SK-N-SH (cell line): ENCODE measurements at regions of chr6 and their contacts with region 1.

Region 1: DNA sequence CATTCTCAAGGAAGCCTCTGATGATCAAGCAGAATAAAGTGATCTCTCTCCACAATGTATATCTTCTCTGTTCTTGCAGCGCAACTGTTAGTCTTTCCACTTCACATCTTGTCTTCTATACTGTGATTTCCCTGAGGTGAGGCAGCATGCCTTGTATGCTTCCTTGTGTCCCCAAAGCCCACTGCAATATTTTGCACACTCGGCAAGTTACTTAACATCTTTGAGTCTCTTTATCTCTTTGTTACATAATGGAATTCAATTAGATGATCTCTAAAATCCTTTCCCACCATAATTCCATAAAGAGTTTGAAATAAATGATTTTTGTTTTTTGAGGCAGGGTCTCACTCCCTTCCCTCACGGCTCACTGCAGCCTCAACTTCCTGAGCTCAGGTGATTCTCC is 40.4 kb upstream of the ALDH8A1 start:
- DNase-seq: no peak
- H3K4me3 ChIP-seq: no peak overlapping the region
- H3K27ac ChIP-seq: no peak overlapping the region
- H3K4me1 ChIP-seq: no peaks in the 10 kb centered on the region
- H3K27me3 ChIP-seq: no peaks in the 10 kb centered on the region
- CTCF ChIP-seq: no peak
- EP300 ChIP-seq: no peak
- RAD21 ChIP-seq: no peak

Region 2: GRCh38 chr6:134967711-134968110 is 22.6 kb before region 1 on chr6:
- CTCF ChIA-PET with region 1: no interaction called
- POLR2A ChIA-PET with region 1: no interaction called
- DNase-seq: no peak
- H3K4me3 ChIP-seq: no peak overlapping the region
- H3K27ac ChIP-seq: no peak overlapping the region
- H3K4me1 ChIP-seq: peaks cover 0 to 6% of the 10 kb centered on the region in 2 experiments; a peak in 1 of 4 replicates
- H3K27me3 ChIP-seq: no peaks in the 10 kb centered on the region
- CTCF ChIP-seq: no peak
- EP300 ChIP-seq: no peak
- RAD21 ChIP-seq: no peak

Region 3: DNA sequence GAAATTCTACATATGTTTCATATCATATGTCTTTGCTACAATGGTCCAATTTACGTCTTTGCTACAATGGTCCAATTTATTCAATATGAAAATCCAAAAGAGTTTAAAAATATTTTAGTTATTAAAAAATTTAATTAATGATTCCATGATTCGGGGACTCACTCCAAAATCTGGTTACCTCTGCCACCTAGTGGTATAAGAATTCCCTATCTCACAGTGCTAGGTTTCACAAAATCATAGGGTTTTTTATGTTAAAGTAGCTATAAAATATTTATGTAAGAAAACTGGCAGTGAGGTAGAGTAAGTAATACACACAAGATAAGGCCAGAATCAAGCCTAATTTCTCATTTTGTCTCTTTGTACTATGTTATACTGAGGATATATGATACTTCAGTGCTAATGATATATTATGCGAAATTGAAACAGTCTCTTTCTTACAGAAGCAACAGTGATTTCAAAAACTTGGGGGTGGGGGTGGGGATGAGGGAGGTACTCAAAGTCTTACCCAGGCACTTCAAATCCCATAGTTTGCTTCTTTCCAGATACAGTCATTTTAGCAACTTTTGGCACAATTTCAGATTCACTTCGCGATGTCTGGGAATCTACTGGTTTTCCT is 12.1 kb after region 1 on chr6:
- CTCF ChIA-PET with region 1: interaction called, 10 read pairs
- POLR2A ChIA-PET with region 1: no interaction called
- DNase-seq: peak; percentile 22
- H3K4me3 ChIP-seq: no peak overlapping the region; a peak in 1 of 4 replicates
- H3K27ac ChIP-seq: no peak overlapping the region
- H3K4me1 ChIP-seq: no peaks in the 10 kb centered on the region
- H3K27me3 ChIP-seq: no peaks in the 10 kb centered on the region
- CTCF ChIP-seq: peak; percentile 67
- EP300 ChIP-seq: no peak
- RAD21 ChIP-seq: peak; percentile 56